ENCODE measurements at regions of chr19 and their contacts with region 1.

Region 1: DNA sequence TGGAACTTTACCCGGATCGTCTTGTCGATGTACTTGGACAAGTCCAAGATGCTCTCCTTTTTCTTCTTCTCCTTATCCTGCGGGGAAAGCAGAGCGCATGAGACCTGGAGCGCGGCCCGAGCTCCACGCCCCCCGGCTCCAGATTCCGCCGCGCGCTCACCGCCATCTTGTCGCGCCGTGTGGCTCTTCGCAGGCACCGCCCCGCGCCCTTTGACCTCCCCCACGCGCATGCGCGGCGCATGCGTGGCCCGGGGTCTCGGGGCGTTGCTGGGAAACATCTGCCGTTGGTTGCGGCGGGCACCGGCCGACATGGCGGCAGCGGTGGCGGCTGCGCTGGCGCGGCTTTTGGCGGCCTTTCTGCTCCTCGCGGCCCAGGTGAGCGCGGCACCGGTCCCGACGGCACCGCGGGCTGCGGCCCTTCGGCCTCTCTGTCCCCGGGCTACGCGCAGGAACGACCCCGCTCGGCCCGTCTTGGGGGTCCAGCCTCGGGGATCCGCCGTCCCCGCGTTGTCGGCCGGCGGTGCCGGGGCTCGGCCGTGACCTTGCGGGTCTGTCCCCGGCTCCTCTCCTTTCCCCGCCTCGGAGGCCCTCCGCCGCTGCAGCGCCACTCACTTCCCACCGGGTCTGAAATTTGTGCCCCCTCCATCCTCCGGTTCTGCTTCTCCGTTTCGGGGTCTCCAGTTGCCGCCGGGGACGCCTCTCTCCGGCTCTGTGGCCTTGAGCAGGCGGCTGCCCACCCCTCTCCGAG is at the starts of genes LSM7 and SPPL2B:
- DNase-seq: peak; percentile 95
- ATAC-seq: peak; percentile 78
- H3K4me3 Mint-ChIP-seq: peak within 1 kb of the TSS; percentile 98
- H3K27ac Mint-ChIP-seq: peak within 1 kb of the TSS; percentile 99
- H3K4me1 Mint-ChIP-seq: peaks cover 69% of the 10 kb centered on the region
- H3K27me3 Mint-ChIP-seq: no peaks in the 10 kb centered on the region
- total RNA-seq, gene LSM7: 113 to 134 TPM
- total RNA-seq, gene SPPL2B: 37.7 to 48.5 TPM

Region 2: DNA sequence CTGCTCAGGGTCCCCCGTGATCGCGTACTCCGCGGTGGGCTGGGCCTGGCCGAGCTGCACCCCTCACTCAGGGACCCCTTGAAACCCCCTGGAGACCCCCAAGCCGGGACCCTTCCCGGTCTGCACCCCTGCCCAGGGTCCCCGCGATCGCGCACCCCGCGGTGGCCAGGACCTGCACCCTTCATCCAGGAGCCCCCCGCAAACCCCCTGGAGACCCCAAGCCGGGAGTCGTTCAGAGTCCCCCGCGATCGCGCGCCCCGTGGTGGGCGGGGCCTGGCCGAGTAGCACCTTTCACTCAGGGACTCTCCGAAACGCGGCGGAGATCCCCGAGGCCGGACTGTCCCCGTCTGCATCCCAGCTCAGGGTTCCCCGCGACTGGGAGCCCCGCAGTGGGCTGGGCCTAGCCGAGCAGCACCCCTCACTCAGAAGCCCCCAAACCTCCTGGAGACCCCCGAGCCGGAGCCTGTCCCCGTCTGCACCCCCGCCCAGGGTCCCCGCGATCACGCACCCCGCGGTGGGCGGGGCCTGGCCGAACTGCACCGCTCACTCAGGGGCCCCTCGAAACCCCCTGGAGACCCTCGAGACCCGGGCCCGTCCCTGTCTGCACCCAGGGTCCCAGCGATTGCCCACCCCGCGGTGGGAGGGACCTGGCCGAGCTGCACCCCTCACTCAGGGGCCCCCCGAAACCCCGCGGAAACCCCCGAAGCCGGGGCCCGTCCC is 127.4 kb after region 1 on chr19:
- CTCF ChIA-PET with region 1: interaction called, 3 read pairs
- POLR2A ChIA-PET with region 1: no interaction called
- intact Hi-C with region 1: loop called in 1 of 2 experiments (anchors 2 kb)
- DNase-seq: peak; percentile 73
- ATAC-seq: peak; percentile 47
- H3K4me3 Mint-ChIP-seq: peak overlapping the region; percentile 84
- H3K27ac Mint-ChIP-seq: peak overlapping the region; percentile 88
- H3K4me1 Mint-ChIP-seq: peaks cover 16% of the 10 kb centered on the region
- H3K27me3 Mint-ChIP-seq: no peaks in the 10 kb centered on the region

Region 3: DNA sequence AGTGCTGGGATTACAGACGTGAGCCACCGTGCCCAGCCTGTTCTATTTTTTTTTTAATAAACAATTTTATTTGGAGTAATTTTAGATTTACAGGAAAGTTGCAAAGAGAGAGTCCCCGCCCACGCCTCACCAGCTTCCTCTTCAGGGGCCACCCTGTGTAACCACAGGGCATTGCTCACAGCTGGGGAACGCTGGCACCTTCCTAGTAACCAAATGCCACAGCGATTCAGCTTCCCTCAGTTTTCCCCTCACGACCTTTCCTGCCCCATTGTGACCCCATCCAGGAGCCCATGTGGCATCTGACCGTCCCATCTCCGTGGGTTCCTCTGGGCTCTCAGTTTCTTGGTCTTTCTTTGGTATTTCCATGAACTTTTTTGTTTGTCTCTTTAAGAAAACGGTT is 290.0 kb after region 1 on chr19:
- CTCF ChIA-PET with region 1: no interaction called
- POLR2A ChIA-PET with region 1: no interaction called
- intact Hi-C with region 1: loop called in 1 of 2 experiments (anchors 2 kb)
- DNase-seq: peak; percentile 94
- ATAC-seq: no peak
- H3K4me3 Mint-ChIP-seq: peak overlapping the region; percentile 46
- H3K27ac Mint-ChIP-seq: peak overlapping the region; percentile 77
- H3K4me1 Mint-ChIP-seq: peaks cover 64% of the 10 kb centered on the region
- H3K27me3 Mint-ChIP-seq: no peaks in the 10 kb centered on the region

Measured in activated CD4-positive, alpha-beta T cell treated with anti-CD3 and anti-CD28 coated beads for 36 hours (primary cell).